ENCODE measurements at regions of chr17 and their contacts with region 1.

Region 1: DNA sequence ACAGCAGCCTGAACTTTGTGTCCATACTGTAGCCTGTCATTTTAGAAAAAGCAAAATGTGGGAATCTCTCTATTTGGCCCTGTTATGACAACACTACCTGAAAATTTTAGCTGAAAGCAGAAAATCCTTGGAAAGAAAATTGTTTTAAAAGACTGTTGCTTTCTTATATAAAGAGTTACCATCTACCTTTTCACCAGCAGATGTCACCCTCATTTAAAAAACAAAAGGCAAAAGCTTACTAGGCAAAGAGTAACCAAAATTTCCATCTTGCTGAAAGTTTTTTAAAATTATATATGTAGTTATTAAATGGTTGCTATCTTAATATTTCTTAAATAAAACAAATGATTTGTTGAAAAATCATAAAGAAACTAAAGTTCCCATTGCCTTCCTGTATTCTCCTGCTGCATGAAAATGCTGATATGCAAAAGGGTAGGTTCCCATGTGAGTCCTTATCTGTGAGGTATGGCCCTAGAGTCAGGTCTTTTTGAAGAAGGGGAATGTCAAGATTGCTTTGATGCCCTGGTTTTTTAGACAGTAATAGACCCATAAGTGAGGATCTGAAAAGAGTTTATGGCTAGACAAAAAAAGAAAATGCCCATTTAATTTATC is 61.0 kb downstream of the TNRC6C start:
- DNase-seq: no peak
- ATAC-seq: no peak
- H3K4me3 Mint-ChIP-seq: no peak overlapping the region
- H3K27ac Mint-ChIP-seq: peak overlapping the region; percentile 35
- H3K4me1 Mint-ChIP-seq: peaks cover 33% of the 10 kb centered on the region
- H3K27me3 Mint-ChIP-seq: no peaks in the 10 kb centered on the region

Region 2: DNA sequence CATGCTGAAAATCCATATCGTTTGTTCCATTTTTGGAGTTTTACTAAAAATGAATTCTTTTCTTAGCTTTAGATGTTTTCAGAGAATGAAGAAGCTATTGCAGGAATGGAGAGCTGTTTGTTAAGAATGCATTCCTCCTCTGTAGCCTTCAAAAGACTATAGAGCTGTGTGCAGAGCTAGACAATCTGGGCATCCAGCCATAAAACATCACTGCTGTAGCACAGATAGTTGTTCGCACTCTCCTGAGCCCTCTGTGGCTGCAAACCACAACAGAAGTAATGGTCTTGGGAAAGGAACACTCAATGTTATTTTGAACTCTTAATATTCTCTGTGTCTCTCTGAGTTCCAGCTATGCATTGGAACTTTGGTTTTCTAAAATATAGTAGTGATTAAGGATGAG is 56.0 kb before region 1 on chr17:
- CTCF ChIA-PET with region 1: interaction called, 15 read pairs
- POLR2A ChIA-PET with region 1: interaction called, 4 read pairs
- intact Hi-C with region 1: loop called in 1 of 2 experiments (anchors 5 kb)
- DNase-seq: peak; percentile 52
- ATAC-seq: no peak
- H3K4me3 Mint-ChIP-seq: peak overlapping the region; percentile 22
- H3K27ac Mint-ChIP-seq: no peak overlapping the region
- H3K4me1 Mint-ChIP-seq: peaks cover 69% of the 10 kb centered on the region
- H3K27me3 Mint-ChIP-seq: no peaks in the 10 kb centered on the region

Region 3: DNA sequence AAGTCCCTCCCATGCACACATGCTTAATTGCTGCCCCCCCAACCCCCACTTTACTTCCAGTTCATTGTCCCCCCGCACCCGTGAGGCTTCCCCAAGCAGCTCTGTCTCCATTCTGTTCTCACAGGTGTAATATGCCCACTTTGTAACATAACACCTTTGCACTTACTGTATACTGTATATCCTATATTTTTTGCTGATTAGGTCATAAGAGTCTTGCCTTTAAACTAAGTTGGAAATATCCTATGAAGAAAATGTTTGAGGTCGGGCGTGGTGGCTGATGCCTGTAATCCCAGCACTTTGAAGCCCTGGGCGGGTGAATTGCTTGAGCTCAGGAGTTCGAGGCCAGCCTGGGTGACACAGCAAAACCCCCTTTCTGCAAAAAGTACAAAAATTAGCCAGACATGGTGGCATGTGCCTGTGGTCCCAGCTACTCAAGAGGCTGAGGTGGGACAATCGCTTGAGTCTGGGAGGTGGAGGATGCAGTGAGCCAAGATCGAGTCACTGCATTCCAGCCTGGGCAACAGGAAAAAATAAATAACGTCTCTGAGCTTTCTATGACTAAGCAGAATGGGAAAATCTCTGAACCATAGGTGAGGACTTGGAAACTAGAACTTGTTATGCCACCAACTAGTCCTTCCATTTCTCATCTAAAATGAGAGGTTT is 15.1 kb after region 1 on chr17:
- CTCF ChIA-PET with region 1: interaction called, 21 read pairs
- POLR2A ChIA-PET with region 1: no interaction called
- intact Hi-C with region 1: no loop called
- DNase-seq: no peak
- ATAC-seq: no peak
- H3K4me3 Mint-ChIP-seq: no peak overlapping the region
- H3K27ac Mint-ChIP-seq: peak overlapping the region; percentile 69
- H3K4me1 Mint-ChIP-seq: peaks cover 19% of the 10 kb centered on the region
- H3K27me3 Mint-ChIP-seq: no peaks in the 10 kb centered on the region

Region 4: DNA sequence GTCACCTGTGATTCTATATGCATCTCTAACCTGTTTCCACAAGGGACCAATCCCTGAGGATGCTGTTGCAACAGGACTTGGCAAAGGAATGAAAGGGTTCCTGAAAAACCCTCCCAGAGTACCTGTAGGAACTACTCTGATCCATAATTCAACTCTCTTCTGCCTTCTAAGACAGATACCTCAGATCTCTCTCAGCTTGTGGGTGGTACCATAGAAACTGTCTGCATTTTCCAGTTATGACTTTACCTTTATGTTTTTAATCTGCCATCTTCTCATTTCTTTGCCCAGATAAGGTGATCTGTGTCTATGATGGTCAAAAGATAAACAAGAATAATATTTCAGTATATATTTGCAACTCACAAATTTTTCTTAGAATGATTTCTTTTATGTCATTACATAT is 44.0 kb after region 1 on chr17:
- CTCF ChIA-PET with region 1: interaction called, 18 read pairs
- POLR2A ChIA-PET with region 1: no interaction called
- intact Hi-C with region 1: no loop called
- DNase-seq: no peak
- ATAC-seq: peak; percentile 74
- H3K4me3 Mint-ChIP-seq: no peak overlapping the region
- H3K27ac Mint-ChIP-seq: no peak overlapping the region
- H3K4me1 Mint-ChIP-seq: peaks cover 18% of the 10 kb centered on the region
- H3K27me3 Mint-ChIP-seq: no peaks in the 10 kb centered on the region

Region 5: DNA sequence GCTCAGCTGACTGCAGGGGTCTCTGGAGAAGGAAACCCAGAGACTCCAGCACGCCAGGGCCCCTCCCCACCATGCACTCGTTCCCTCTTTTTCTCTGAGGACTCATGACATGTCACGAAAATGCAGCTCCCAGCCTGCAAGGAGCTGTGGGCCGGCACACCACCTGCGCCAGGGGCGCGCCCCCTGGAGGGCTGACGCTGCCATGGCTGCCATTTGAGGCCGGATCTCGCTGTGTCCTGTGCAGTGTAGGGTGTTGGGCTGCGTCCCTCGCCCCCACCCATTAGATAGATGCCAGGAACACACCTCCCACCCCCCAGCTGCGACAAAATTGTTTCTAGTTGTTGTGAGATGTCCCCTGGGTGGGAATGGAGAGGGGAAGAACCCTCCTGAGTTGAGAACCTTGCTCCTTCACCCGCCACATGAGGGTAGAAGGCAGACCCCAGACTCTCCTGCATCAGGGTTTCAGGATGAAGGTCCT is 157.1 kb after region 1 on chr17:
- CTCF ChIA-PET with region 1: interaction called, 6 read pairs
- POLR2A ChIA-PET with region 1: no interaction called
- intact Hi-C with region 1: loop called in 1 of 2 experiments (anchors 1 kb)
- DNase-seq: peak; percentile 86
- ATAC-seq: peak; percentile 77
- H3K4me3 Mint-ChIP-seq: no peak overlapping the region
- H3K27ac Mint-ChIP-seq: no peak overlapping the region
- H3K4me1 Mint-ChIP-seq: peaks cover 47% of the 10 kb centered on the region
- H3K27me3 Mint-ChIP-seq: no peaks in the 10 kb centered on the region

Region 6: GRCh38 chr17:78272181-78272913 is 252.9 kb after region 1 on chr17:
- CTCF ChIA-PET with region 1: no interaction called
- POLR2A ChIA-PET with region 1: no interaction called
- intact Hi-C with region 1: no loop called
- DNase-seq: peak; percentile 86
- ATAC-seq: peak; percentile 94
- H3K4me3 Mint-ChIP-seq: no peak overlapping the region
- H3K27ac Mint-ChIP-seq: peak overlapping the region; percentile 31
- H3K4me1 Mint-ChIP-seq: peaks cover 36% of the 10 kb centered on the region
- H3K27me3 Mint-ChIP-seq: no peaks in the 10 kb centered on the region

Region 7: GRCh38 chr17:78294776-78295175 is 275.3 kb after region 1 on chr17:
- CTCF ChIA-PET with region 1: no interaction called
- POLR2A ChIA-PET with region 1: no interaction called
- intact Hi-C with region 1: no loop called
- DNase-seq: no peak
- ATAC-seq: no peak
- H3K4me3 Mint-ChIP-seq: no peak overlapping the region
- H3K27ac Mint-ChIP-seq: no peak overlapping the region
- H3K4me1 Mint-ChIP-seq: peaks cover 2% of the 10 kb centered on the region
- H3K27me3 Mint-ChIP-seq: no peaks in the 10 kb centered on the region

Measured in activated CD4-positive, alpha-beta T cell treated with anti-CD3 and anti-CD28 coated beads for 36 hours (primary cell).